ENCODE measurements at regions of chr5 and their contacts with region 1.

Region 1: DNA sequence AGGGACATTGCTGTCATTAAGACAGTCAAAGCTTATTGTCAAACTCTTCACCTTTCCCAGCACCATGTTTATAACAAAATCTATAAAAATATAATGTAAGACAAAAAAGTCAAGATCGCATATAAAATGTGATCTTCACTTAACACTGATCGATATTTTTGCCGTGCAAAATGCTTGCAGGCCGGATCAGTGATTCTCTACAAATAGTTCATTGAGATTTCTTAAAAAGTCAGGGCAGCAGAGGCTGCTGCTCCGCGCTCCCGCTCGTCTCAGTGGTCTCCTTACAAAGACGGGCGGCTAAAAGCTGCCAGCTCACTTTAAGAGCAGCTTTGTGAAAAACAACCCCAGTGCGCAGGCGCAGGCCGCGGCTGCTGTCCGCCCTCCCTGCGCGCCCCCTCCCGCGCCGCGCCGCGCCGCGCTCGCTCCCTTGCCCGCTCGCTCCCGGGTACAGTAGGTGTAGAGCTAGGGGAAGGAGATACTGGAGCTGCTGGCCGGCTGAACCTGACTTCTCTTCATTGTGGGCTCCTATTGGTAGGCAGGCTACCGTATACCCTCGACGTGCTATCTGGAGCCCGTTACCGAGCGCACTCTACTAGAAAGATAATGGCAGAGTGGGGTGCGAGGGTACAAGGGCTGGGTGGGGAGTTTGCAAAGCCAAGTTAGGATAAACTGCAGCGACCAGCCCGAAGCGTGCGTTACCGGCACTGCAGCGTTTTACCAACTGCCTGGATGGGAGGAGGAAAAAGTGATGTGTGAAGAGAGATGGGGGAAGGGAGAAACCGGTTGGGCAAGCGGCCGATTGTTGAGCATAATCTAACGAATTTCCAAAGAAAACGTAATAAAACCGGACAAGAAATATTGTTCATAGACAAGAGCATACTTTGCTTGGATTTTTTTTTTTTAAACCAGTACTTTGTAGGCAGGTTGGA is at the start of gene ARRDC3:
- DNase-seq: peak; percentile 98

Region 2: DNA sequence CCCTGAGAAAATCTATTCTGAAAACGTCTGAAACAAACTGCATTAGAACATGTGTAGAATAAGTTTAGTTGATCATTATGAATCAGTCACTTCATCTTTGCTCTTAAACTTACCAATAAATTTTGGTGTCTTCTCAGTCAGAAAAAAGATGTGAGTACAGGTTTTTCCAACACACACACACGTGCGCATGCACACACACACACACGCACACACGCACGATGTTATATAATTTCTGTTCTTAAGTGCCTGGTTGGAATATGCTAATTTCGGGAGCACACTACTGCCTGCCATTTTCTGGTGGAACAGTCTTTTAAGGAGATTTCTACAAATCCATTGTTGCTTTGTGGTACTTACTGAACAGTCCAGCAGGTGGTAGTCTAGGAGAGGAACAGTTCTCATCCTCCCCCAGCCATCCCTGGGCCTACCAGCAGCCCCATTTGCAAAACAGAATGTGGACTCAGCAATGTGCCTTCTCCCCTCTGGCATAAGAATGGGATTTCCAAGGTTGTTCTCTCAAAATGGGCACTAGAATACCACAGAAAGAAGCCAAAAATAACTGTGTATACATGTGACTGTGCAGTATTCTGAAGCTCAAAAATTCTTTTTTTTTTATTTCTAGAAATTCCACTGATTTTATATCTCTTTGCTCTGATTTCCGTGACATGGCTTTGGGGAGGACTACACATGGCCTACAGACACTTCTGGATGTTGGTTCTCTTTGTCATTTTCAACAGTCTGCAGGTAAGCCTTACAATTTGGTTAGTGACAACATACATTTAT is 281.5 kb before region 1 on chr5:
- in situ Hi-C with region 1: loop called (anchors 25 kb)
- DNase-seq: peak; percentile 80